Transverse colon (tissue), 4 donors: ENCODE measurements at regions of chr11 and their contacts with region 1.

Region 1: DNA sequence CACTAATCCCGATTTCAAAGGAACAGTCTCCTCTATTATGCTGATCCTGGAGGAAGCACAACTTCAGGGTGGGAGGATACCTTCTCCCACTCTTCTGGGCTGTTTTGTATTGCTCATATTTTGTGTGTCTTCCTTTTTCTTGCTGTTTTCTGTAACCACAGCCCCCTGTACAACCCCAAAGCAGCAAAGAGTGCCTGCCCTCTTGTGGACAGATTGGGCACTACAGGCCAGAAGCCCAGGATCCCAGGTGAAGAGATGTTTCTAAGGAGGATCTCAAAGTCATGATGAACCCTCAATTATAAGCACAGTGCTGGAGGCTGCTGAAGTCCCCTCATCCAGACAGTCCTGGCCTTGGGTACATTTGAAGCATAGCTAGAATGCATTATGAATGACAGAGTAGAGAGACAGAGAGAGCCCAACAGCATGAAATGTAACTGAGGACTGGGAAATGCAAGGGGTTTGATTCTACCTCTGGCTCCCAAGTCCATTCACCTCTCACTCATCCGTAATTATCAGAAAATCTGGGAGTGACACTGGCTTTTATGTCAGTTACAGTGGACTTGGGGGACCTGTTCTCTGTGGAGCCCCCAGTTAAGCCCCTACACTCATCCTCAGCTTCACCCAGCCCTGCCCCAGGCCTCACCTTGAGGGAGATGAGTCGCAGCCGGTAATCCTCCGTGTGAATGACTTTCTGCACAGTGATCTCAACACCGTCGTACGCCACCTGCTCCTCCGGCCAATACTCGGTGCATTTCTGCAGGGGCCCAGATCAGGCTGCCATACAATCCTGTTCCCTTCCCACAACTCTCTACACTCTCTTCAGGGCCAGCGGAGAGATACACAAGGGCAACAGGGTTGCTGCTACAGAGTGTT is 6.2 kb upstream of the IGSF22 start:
- DNase-seq: peak; percentile 59
- H3K4me3 ChIP-seq: no peak overlapping the region
- H3K27ac ChIP-seq: no peak overlapping the region
- H3K4me1 ChIP-seq: no peaks in the 10 kb centered on the region
- H3K27me3 ChIP-seq: no peaks in the 10 kb centered on the region
- CTCF ChIP-seq: peak; percentile 78 to 96 (median 95)
- EP300 ChIP-seq: no peak
- POLR2A ChIP-seq: no peak

Region 2: GRCh38 chr11:17890325-17890724 is 841.9 kb before region 1 on chr11:
- in situ Hi-C with region 1: no loop called
- intact Hi-C with region 1: no loop called
- DNase-seq: no peak
- H3K4me3 ChIP-seq: no peak overlapping the region
- H3K27ac ChIP-seq: no peak overlapping the region
- H3K4me1 ChIP-seq: no peaks in the 10 kb centered on the region
- H3K27me3 ChIP-seq: no peaks in the 10 kb centered on the region
- CTCF ChIP-seq: no peak
- EP300 ChIP-seq: no peak
- POLR2A ChIP-seq: no peak

Region 3: DNA sequence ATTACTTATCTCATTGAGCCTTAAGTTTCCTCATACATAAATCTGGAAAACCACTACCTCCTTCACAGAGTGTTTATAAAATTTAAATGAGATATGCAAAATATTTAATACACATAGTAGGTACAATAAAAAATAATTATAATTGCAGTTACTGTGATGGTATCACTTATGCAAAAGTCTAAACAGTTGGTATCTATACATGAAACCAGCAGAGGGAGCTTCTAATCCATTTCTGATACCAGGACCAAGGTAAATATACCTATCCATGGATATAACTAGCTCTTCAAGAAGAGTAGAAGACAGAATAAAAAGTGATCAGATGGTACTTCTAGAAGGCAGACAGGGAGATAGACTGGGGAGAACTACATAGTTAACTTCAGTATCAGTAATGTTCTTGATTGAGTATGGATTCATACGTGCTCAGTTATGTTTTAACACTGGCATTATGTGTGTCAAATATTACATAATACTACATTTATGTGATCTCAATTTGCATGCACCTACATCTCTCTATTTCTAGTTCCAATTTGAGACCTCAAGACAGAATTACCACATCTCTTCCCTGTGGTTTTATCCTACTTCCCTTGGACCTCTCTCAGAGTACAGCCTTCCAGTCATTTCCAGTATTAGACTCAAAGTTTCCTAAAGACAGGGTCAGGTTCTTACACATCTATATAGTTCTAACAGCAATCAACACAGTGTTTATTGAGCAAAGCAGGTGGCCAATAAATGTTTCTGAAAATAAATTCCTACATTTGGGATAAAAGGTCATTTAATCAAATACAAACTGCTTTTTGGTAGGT is 191.8 kb before region 1 on chr11:
- in situ Hi-C with region 1: loop called in 2 of 4 experiments (anchors 10 to 25 kb)
- intact Hi-C with region 1: no loop called
- DNase-seq: no peak
- H3K4me3 ChIP-seq: no peak overlapping the region
- H3K27ac ChIP-seq: no peak overlapping the region
- H3K4me1 ChIP-seq: no peaks in the 10 kb centered on the region
- H3K27me3 ChIP-seq: no peaks in the 10 kb centered on the region
- CTCF ChIP-seq: peak; percentile 22 to 52 (median 36)
- EP300 ChIP-seq: no peak
- POLR2A ChIP-seq: no peak

Region 4: GRCh38 chr11:18567081-18567480 is 165.1 kb before region 1 on chr11:
- in situ Hi-C with region 1: loop called in 1 of 4 experiments (anchors 25 kb)
- intact Hi-C with region 1: no loop called
- DNase-seq: no peak
- H3K4me3 ChIP-seq: no peak overlapping the region
- H3K27ac ChIP-seq: no peak overlapping the region
- H3K4me1 ChIP-seq: no peaks in the 10 kb centered on the region
- H3K27me3 ChIP-seq: no peaks in the 10 kb centered on the region
- CTCF ChIP-seq: no peak
- EP300 ChIP-seq: no peak
- POLR2A ChIP-seq: no peak